OCI-LY7 (cell line): ENCODE measurements at regions of chr9 and their contacts with region 1.

Region 1: GRCh38 chr9:124771021-124771866 is at the start of gene NR6A1:
- DNase-seq: peak; percentile 98
- H3K4me3 ChIP-seq: peak within 1 kb of the TSS; percentile 84
- H3K27ac ChIP-seq: peak within 1 kb of the TSS; percentile 60
- H3K4me1 ChIP-seq: peaks cover 43% of the 10 kb centered on the region
- CTCF ChIP-seq: peak; percentile 53
- total RNA-seq, gene NR6A1: 13.0 and 17.5 TPM in 2 replicates

Region 2: GRCh38 chr9:124617471-124618141 is 153.6 kb before region 1 on chr9:
- CTCF ChIA-PET with region 1: no interaction called
- POLR2A ChIA-PET with region 1: no interaction called
- intact Hi-C with region 1: loop called (anchors 2 kb)
- DNase-seq: peak; percentile 76
- H3K4me3 ChIP-seq: no peak overlapping the region
- H3K27ac ChIP-seq: no peak overlapping the region
- H3K4me1 ChIP-seq: peaks cover 6% of the 10 kb centered on the region
- CTCF ChIP-seq: peak; percentile 98

Region 3: GRCh38 chr9:124861342-124862229 is 90.3 kb after region 1 on chr9 and contains the starts of genes ARPC5L and RPL35:
- CTCF ChIA-PET with region 1: no interaction called
- POLR2A ChIA-PET with region 1: interaction called, 6 read pairs
- intact Hi-C with region 1: loop called (anchors 2 kb)
- DNase-seq: peak; percentile 97
- H3K4me3 ChIP-seq: peak within 1 kb of the TSS; percentile 94
- H3K27ac ChIP-seq: peak within 1 kb of the TSS; percentile 65
- H3K4me1 ChIP-seq: peaks cover 37% of the 10 kb centered on the region
- CTCF ChIP-seq: peak; percentile 64
- total RNA-seq, gene ARPC5L: 70.0 and 74.0 TPM in 2 replicates
- total RNA-seq, gene RPL35: 4,825 and 6,190 TPM in 2 replicates

Region 4: GRCh38 chr9:124873664-124874063 is 102.4 kb after region 1 on chr9:
- CTCF ChIA-PET with region 1: no interaction called
- POLR2A ChIA-PET with region 1: no interaction called
- intact Hi-C with region 1: no loop called
- DNase-seq: no peak
- H3K4me3 ChIP-seq: no peak overlapping the region
- H3K27ac ChIP-seq: peak overlapping the region; percentile 88
- H3K4me1 ChIP-seq: peaks cover 39% of the 10 kb centered on the region
- CTCF ChIP-seq: no peak

Region 5: GRCh38 chr9:124940693-124941453 is 169.6 kb after region 1 on chr9 and contains the start of gene GOLGA1:
- CTCF ChIA-PET with region 1: no interaction called
- POLR2A ChIA-PET with region 1: interaction called, 4 read pairs
- intact Hi-C with region 1: loop called (anchors 5 kb)
- DNase-seq: peak; percentile 95
- H3K4me3 ChIP-seq: peak within 1 kb of the TSS; percentile 81
- H3K27ac ChIP-seq: peak within 1 kb of the TSS; percentile 91
- H3K4me1 ChIP-seq: peaks cover 53% of the 10 kb centered on the region
- CTCF ChIP-seq: no peak
- total RNA-seq, gene GOLGA1: 15.1 and 19.2 TPM in 2 replicates

Region 6: DNA sequence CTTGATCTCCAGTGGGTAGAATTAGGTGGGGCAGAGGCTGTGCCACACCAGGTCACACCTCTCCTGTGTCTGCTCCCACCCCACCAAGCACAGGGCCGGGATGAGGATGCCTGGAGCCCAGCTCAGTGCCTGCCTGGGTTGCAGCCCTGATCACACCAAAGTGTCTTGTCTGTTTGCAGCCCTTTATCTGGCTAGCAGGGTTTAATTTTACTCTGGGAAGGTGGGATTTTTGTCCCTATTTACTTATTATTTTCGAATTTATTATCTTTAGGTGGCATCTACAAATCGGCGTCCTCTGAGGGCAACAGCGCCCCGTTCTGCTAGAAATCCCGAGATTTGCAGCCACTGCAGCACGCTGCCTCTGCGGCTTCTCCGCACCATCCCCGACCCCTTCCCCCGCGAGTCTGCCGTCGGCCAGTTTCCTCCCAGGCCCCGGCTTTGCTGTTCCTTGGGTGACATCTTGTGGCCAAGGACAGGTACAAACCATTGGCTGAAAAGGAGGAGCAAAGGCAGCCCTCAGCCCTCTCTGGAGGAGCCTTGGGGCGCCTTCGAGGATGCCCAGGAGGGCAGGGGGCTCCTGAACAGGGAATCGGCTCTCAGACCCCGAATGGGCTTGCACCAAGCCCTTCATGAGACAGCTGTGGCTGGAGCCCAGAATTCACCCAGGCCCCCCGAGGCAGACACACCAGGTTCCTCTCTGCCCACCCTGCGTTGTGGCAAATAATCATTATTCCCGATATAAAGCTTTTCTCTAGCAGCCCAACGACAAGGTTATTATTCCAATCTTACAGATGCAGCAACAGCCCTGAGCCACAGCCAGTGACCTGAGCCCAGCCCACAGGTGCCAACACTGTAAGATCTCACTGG is 603.4 kb after region 1 on chr9:
- CTCF ChIA-PET with region 1: no interaction called
- POLR2A ChIA-PET with region 1: no interaction called
- intact Hi-C with region 1: loop called (anchors 1 kb)
- DNase-seq: peak; percentile 87
- H3K4me3 ChIP-seq: peak overlapping the region; percentile 13
- H3K27ac ChIP-seq: no peak overlapping the region
- H3K4me1 ChIP-seq: peaks cover 7% of the 10 kb centered on the region
- CTCF ChIP-seq: peak; percentile 89

Region 7: GRCh38 chr9:125529589-125530515 is 758.6 kb after region 1 on chr9:
- CTCF ChIA-PET with region 1: no interaction called
- POLR2A ChIA-PET with region 1: no interaction called
- intact Hi-C with region 1: no loop called
- DNase-seq: peak; percentile 56
- H3K4me3 ChIP-seq: peak overlapping the region; percentile 30
- H3K27ac ChIP-seq: peak overlapping the region; percentile 56
- H3K4me1 ChIP-seq: peaks cover 25% of the 10 kb centered on the region
- CTCF ChIP-seq: no peak

Region 8: GRCh38 chr9:125558453-125559092 is 787.3 kb after region 1 on chr9:
- CTCF ChIA-PET with region 1: no interaction called
- POLR2A ChIA-PET with region 1: no interaction called
- intact Hi-C with region 1: no loop called
- DNase-seq: peak; percentile 72
- H3K4me3 ChIP-seq: no peak overlapping the region
- H3K27ac ChIP-seq: no peak overlapping the region
- H3K4me1 ChIP-seq: peaks cover 9% of the 10 kb centered on the region
- CTCF ChIP-seq: peak; percentile 95